ENCODE measurements at regions of chr2 and their contacts with region 1.

Region 1: GRCh38 chr2:74458132-74458925 is at the start of gene WBP1:
- DNase-seq: peak; percentile 98 to 100
- ATAC-seq: peak; percentile 77 to 93 (median 81)
- H3K4me3 ChIP-seq: peak within 1 kb of the TSS; percentile 89
- H3K4me3 Mint-ChIP-seq: peak within 1 kb of the TSS; percentile 98
- H3K27ac ChIP-seq: peak within 1 kb of the TSS; percentile 99
- H3K27ac Mint-ChIP-seq: peak within 1 kb of the TSS; percentile 98 to 99
- H3K4me1 ChIP-seq: peaks cover 37% of the 10 kb centered on the region
- H3K4me1 Mint-ChIP-seq: peaks cover 59 to 73% of the 10 kb centered on the region in 2 donors
- H3K27me3 ChIP-seq: no peaks in the 10 kb centered on the region
- H3K27me3 Mint-ChIP-seq: no peaks in the 10 kb centered on the region
- CTCF ChIP-seq: no peak
- total RNA-seq, gene WBP1: 65.1 to 68.3 (median 65.4) TPM

Region 2: GRCh38 chr2:73736855-73737779 is 721.2 kb before region 1 on chr2 and contains the start of gene TPRKB:
- intact Hi-C with region 1: loop called (anchors 5 kb)
- DNase-seq: peak; percentile 87 to 97
- ATAC-seq: peak; percentile 98 to 99 (median 99)
- H3K4me3 ChIP-seq: peak within 1 kb of the TSS; percentile 62
- H3K4me3 Mint-ChIP-seq: peak within 1 kb of the TSS; percentile 96
- H3K27ac ChIP-seq: peak within 1 kb of the TSS; percentile 68
- H3K27ac Mint-ChIP-seq: peak within 1 kb of the TSS; percentile 85 to 90
- H3K4me1 ChIP-seq: peaks cover 13% of the 10 kb centered on the region
- H3K4me1 Mint-ChIP-seq: peaks cover 18 to 20% of the 10 kb centered on the region in 2 donors
- H3K27me3 ChIP-seq: no peaks in the 10 kb centered on the region
- H3K27me3 Mint-ChIP-seq: no peaks in the 10 kb centered on the region
- CTCF ChIP-seq: no peak
- total RNA-seq, gene TPRKB: 20.4 to 24.1 (median 22.8) TPM

Region 3: GRCh38 chr2:74421221-74421870 is 37.0 kb before region 1 on chr2 and contains the starts of genes C2orf81 and WDR54:
- intact Hi-C with region 1: loop called (anchors 1 kb)
- DNase-seq: peak; percentile 95 to 97
- ATAC-seq: peak; percentile 90 to 96 (median 94)
- H3K4me3 ChIP-seq: peak within 1 kb of the TSS; percentile 79
- H3K4me3 Mint-ChIP-seq: peak within 1 kb of the TSS; percentile 99
- H3K27ac ChIP-seq: peak within 1 kb of the TSS; percentile 99
- H3K27ac Mint-ChIP-seq: peak within 1 kb of the TSS; percentile 94 to 96
- H3K4me1 ChIP-seq: peaks cover 16% of the 10 kb centered on the region
- H3K4me1 Mint-ChIP-seq: peaks cover 20 to 28% of the 10 kb centered on the region in 2 donors
- H3K27me3 ChIP-seq: no peaks in the 10 kb centered on the region
- H3K27me3 Mint-ChIP-seq: peaks cover 0 to under 1% of the 10 kb centered on the region in 2 donors
- CTCF ChIP-seq: no peak
- total RNA-seq, gene C2orf81: 1.7 to 3.2 (median 1.7) TPM
- total RNA-seq, gene WDR54: 28.0 to 35.3 (median 28.0) TPM

Region 4: DNA sequence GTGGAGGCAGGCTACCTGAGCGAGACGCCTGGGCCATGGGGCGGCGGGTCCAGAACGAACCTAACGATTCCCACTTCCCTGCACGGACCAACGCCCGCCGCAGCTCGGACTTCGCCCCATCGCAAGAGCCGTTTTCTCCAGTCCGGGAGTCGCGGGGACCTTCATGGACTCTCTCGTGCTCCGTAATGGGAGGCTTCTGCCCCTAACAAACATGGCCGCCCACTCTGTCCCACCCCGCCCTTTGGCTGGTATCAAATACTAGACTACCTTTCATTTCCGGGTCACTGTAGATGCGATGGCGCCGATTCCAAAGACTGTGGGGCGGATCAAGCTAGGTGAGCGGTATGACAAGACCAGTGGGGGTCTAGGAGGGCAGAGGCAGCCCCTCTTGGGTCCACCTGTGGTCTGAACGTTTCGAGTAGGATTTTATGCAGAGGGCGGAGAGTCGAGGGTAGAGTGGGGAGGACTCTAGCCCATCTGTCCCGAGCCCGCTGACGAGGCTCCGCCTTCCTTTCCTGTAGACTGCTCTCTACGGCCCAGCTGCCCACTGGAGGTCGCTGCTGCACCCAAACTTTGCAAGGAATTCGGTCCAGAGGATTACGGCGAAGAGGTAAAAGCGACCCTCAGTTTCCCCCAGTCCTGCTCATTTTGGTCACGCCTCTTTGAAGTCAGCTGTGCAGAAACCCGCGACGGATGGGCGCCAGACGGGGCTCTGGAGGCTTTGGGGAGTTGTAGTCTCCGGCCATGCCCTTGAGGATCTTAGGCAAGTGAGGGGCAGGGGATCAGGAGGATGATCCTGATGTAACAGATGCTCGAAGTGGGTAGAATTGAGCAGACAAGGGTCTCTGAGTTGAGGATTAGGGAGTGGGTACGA is 24.7 kb after region 1 on chr2 and contains the starts of genes CCDC142 and TTC31:
- intact Hi-C with region 1: loop called (anchors 1 kb)
- DNase-seq: peak; percentile 88 to 96
- ATAC-seq: peak; percentile 91 to 98 (median 92)
- H3K4me3 ChIP-seq: peak within 1 kb of the TSS; percentile 81
- H3K4me3 Mint-ChIP-seq: peak within 1 kb of the TSS; percentile 99
- H3K27ac ChIP-seq: peak within 1 kb of the TSS; percentile 88
- H3K27ac Mint-ChIP-seq: peak within 1 kb of the TSS; percentile 97
- H3K4me1 ChIP-seq: peaks cover 29% of the 10 kb centered on the region
- H3K4me1 Mint-ChIP-seq: peaks cover 24 to 35% of the 10 kb centered on the region in 2 donors
- H3K27me3 ChIP-seq: no peaks in the 10 kb centered on the region
- H3K27me3 Mint-ChIP-seq: no peaks in the 10 kb centered on the region
- CTCF ChIP-seq: peak; percentile 85
- total RNA-seq, gene CCDC142: 14.9 to 25.2 (median 15.6) TPM
- total RNA-seq, gene TTC31: 51.3 to 59.7 (median 53.1) TPM

Region 5: DNA sequence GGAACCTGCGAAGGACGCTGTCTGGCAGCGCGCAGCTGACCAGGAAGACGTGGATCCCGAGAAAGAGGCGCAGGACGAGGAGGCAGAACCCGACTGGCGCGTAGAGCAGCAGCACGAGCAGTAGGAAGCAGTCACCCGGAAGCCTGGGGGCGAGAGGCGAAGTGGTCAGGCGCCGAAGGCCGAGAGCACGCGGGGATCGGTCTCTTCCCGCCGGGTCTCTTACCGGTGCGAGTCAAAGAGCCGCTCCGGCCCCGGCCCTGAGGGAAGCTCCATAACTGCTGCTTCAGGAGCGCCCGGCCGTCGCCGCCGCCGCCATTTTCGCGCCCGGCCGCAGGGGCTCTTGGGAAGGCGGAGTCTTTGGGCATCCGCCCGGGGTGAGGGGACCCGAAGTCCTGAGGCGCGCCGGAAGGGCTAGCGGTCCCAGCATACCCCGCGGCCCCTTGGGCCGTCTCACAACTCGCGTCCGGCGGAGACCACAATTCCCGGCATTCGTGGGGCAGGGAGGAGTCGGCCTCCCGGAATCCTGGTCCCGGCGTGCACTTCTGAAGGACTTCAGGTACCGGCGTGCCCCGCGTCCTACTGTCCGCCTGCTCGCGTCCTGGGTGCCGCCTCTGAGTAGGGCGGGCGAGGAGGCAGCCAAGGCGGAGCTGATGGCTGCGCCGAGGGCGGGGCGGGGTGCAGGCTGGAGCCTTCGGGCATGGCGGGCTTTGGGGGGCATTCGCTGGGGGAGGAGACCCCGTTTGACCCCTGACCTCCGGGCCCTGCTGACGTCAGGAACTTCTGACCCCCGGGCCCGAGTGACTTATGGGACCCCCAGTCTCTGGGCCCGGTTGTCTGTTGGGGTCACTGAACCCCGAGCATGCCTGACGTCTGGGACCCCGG is 71.3 kb after region 1 on chr2 and contains the starts of genes AUP1 and HTRA2:
- intact Hi-C with region 1: loop called (anchors 1 kb)
- DNase-seq: peak; percentile 83 to 91
- ATAC-seq: peak; percentile 75 to 90 (median 77)
- H3K4me3 ChIP-seq: peak within 1 kb of the TSS; percentile 92
- H3K4me3 Mint-ChIP-seq: peak within 1 kb of the TSS; percentile 96
- H3K27ac ChIP-seq: peak within 1 kb of the TSS; percentile 95
- H3K27ac Mint-ChIP-seq: peak within 1 kb of the TSS; percentile 94 to 95
- H3K4me1 ChIP-seq: peaks cover 31% of the 10 kb centered on the region
- H3K4me1 Mint-ChIP-seq: peaks cover 32 to 44% of the 10 kb centered on the region in 2 donors
- H3K27me3 ChIP-seq: no peaks in the 10 kb centered on the region
- H3K27me3 Mint-ChIP-seq: no peaks in the 10 kb centered on the region
- CTCF ChIP-seq: no peak
- total RNA-seq, gene AUP1: 234 to 242 (median 237) TPM
- total RNA-seq, gene HTRA2: 32.1 to 47.6 (median 45.2) TPM

Measured in natural killer cell (primary cell).